Activated T-helper 2 cell treated with anti-CD3 and anti-CD28 coated beads, Interferon-gamma antibody, Interleukin-2, Interleukin-4, amounts not matched to agents 10 μg/mL and 5 μg/mL and 100 μg/mL, durations not matched to agents 14 hours and 24 hours and 36 hours (primary cell): ENCODE measurements at regions of chr6 and their contacts with region 1.

Region 1: GRCh38 chr6:90080876-90081481 is 186.7 kb downstream of the GJA10 start:
- DNase-seq: peak; percentile 77
- H3K4me3 Mint-ChIP-seq: peak overlapping the region; percentile 94
- H3K27ac Mint-ChIP-seq: peak overlapping the region; percentile 98
- H3K4me1 Mint-ChIP-seq: peaks cover 78% of the 10 kb centered on the region
- H3K27me3 Mint-ChIP-seq: no peaks in the 10 kb centered on the region

Region 2: GRCh38 chr6:89792873-89793272 is 288.1 kb before region 1 on chr6:
- intact Hi-C with region 1: no loop called
- DNase-seq: peak; percentile 20
- H3K4me3 Mint-ChIP-seq: peak overlapping the region; percentile 19
- H3K27ac Mint-ChIP-seq: peak overlapping the region; percentile 10
- H3K4me1 Mint-ChIP-seq: peaks cover 31% of the 10 kb centered on the region
- H3K27me3 Mint-ChIP-seq: no peaks in the 10 kb centered on the region

Region 3: DNA sequence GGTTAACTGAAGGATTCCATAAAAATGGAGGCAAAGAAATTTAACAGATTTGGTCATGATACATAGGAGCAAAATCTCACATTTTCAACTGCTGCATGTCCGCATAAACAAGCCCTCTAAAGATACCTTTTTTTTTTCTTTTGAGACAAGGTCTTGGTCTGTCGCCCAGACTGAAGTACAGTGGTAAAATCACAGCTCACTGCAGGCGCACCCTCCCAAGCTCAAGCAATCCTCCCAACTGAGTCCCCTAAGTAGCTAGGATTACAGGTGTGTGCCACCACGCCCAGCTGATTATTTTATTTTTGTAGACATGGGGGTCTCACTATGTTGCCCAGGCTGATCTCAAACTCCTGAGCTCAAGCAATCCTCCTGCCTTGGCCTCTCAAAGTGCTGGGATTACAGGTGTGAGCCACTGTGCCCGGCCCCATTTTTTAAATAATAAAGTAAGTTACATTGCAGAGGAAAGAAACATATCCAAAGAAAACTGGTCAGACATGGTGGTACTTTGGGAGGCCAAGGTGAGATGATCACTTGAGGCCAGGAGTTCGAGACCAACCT is 275.1 kb before region 1 on chr6:
- intact Hi-C with region 1: no loop called
- DNase-seq: no peak
- H3K4me3 Mint-ChIP-seq: no peak overlapping the region
- H3K27ac Mint-ChIP-seq: no peak overlapping the region
- H3K4me1 Mint-ChIP-seq: peaks cover 4% of the 10 kb centered on the region
- H3K27me3 Mint-ChIP-seq: no peaks in the 10 kb centered on the region

Region 4: GRCh38 chr6:89829591-89830385 is 251.2 kb before region 1 on chr6 and contains the start of gene CASP8AP2:
- intact Hi-C with region 1: loop called (anchors 2 kb)
- DNase-seq: peak; percentile 93
- H3K4me3 Mint-ChIP-seq: peak within 1 kb of the TSS; percentile 98
- H3K27ac Mint-ChIP-seq: peak within 1 kb of the TSS; percentile 95
- H3K4me1 Mint-ChIP-seq: peaks cover 23% of the 10 kb centered on the region
- H3K27me3 Mint-ChIP-seq: no peaks in the 10 kb centered on the region
- total RNA-seq, gene CASP8AP2: 31.8 and 32.8 TPM in 2 replicates

Region 5: GRCh38 chr6:90036963-90037362 is 44.0 kb before region 1 on chr6:
- intact Hi-C with region 1: no loop called
- DNase-seq: no peak
- H3K4me3 Mint-ChIP-seq: no peak overlapping the region
- H3K27ac Mint-ChIP-seq: no peak overlapping the region
- H3K4me1 Mint-ChIP-seq: peaks cover 25% of the 10 kb centered on the region
- H3K27me3 Mint-ChIP-seq: no peaks in the 10 kb centered on the region

Region 6: DNA sequence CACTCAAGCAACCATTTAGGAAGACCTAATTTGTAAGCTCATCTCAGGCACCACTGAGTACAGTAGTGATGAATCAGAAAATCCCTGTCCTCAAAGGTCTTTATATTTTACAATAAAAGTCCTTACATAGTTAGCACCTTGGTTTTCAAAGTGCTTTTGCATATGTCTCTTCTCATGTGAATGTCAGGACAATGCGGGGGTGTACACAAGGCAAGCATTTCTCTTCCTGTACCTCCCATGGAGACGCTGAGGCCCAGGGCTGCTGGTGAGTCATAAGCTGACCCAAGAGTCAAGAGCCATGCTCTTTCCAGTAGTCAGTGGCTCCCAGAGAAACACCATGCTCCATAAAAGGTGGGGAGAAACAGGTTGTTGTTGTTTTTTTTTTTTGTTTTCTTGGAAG is 12.7 kb before region 1 on chr6:
- intact Hi-C with region 1: loop called (anchors 1 kb)
- DNase-seq: no peak
- H3K4me3 Mint-ChIP-seq: peak overlapping the region; percentile 5
- H3K27ac Mint-ChIP-seq: peak overlapping the region; percentile 46
- H3K4me1 Mint-ChIP-seq: peaks cover 74% of the 10 kb centered on the region
- H3K27me3 Mint-ChIP-seq: no peaks in the 10 kb centered on the region

Region 7: GRCh38 chr6:90194371-90194841 is 113.4 kb after region 1 on chr6:
- intact Hi-C with region 1: loop called (anchors 5 kb)
- DNase-seq: no peak
- H3K4me3 Mint-ChIP-seq: no peak overlapping the region
- H3K27ac Mint-ChIP-seq: peak overlapping the region; percentile 43
- H3K4me1 Mint-ChIP-seq: peaks cover 63% of the 10 kb centered on the region
- H3K27me3 Mint-ChIP-seq: no peaks in the 10 kb centered on the region

Region 8: GRCh38 chr6:90274451-90275030 is 193.6 kb after region 1 on chr6:
- intact Hi-C with region 1: loop called (anchors 1 kb)
- DNase-seq: peak; percentile 78
- H3K4me3 Mint-ChIP-seq: peak overlapping the region; percentile 72
- H3K27ac Mint-ChIP-seq: peak overlapping the region; percentile 97
- H3K4me1 Mint-ChIP-seq: peaks cover 84% of the 10 kb centered on the region
- H3K27me3 Mint-ChIP-seq: no peaks in the 10 kb centered on the region

Region 9: GRCh38 chr6:90445533-90446108 is 364.6 kb after region 1 on chr6:
- intact Hi-C with region 1: loop called (anchors 1 kb)
- DNase-seq: no peak
- H3K4me3 Mint-ChIP-seq: no peak overlapping the region
- H3K27ac Mint-ChIP-seq: peak overlapping the region; percentile 97
- H3K4me1 Mint-ChIP-seq: peaks cover 56% of the 10 kb centered on the region
- H3K27me3 Mint-ChIP-seq: no peaks in the 10 kb centered on the region